Panc1 (cell line): ENCODE measurements at regions of chr12 and their contacts with region 1.

Region 1: DNA sequence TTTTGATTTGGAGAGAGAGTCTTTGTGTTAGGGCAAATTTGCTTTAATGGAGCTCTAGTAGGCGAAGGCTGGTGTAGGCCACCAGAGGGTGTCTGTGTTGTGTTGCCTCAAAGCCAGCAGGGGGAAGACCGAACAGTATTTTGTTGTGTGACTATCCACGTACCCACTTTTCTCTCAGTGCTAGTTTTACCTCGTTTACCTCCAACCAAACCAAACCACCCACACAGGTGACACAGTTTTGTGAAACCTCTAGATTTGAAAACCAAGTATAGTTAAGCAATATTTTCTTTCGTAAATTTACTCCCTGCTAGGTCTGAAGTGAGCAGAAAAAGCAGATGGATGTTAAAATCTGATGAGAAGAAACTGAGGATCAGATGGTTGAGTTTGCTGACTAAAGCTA is 36.3 kb upstream of the NPFF start:
- DNase-seq: peak; percentile 64
- ATAC-seq: peak; percentile 93
- H3K4me3 ChIP-seq: no peak overlapping the region
- H3K27ac ChIP-seq: peak overlapping the region; percentile 56
- H3K4me1 ChIP-seq: peaks cover 6% of the 10 kb centered on the region
- H3K27me3 ChIP-seq: no peaks in the 10 kb centered on the region
- CTCF ChIP-seq: peak; percentile 91

Region 2: GRCh38 chr12:53675651-53676453 is 132.3 kb after region 1 on chr12 and contains the start of gene ATP5MC2:
- CTCF ChIA-PET with region 1: interaction called, 8 read pairs
- POLR2A ChIA-PET with region 1: interaction called, 4 read pairs
- in situ Hi-C with region 1: no loop called
- intact Hi-C with region 1: loop called (anchors 5 kb)
- DNase-seq: peak; percentile 99
- ATAC-seq: peak; percentile 98
- H3K4me3 ChIP-seq: peak within 1 kb of the TSS; percentile 69 to 79
- H3K27ac ChIP-seq: peak within 1 kb of the TSS; percentile 97
- H3K4me1 ChIP-seq: peaks cover 12% of the 10 kb centered on the region
- H3K27me3 ChIP-seq: no peaks in the 10 kb centered on the region
- CTCF ChIP-seq: peak; percentile 100
- total RNA-seq, gene ATP5MC2: 290 TPM

Region 3: DNA sequence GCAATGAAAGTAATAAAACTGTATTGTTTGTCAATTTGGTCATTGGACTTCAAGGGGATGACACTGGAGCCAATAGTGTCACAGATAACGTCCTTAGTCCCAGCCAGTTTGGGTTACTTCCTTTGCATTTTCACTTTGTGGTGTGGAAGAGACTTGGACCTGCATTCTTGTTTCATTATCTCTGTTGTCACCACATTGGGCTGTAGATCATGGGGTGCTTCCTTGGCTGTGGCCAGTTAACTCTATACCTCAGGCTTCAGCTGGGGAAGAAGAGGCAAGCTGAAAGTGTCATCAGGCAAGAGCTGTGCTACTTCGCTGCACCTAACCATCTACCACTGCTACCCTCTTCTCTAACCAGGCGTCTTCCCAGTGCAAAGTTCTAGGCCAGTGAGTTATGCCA is 223.3 kb after region 1 on chr12:
- CTCF ChIA-PET with region 1: no interaction called
- POLR2A ChIA-PET with region 1: no interaction called
- in situ Hi-C with region 1: no loop called
- intact Hi-C with region 1: no loop called
- DNase-seq: no peak
- ATAC-seq: no peak
- H3K4me3 ChIP-seq: no peak overlapping the region
- H3K27ac ChIP-seq: peak overlapping the region; percentile 72
- H3K4me1 ChIP-seq: peaks cover 48% of the 10 kb centered on the region
- H3K27me3 ChIP-seq: no peaks in the 10 kb centered on the region
- CTCF ChIP-seq: no peak